Activated B cell treated with CpG ODN at 0.5 μM for 24 hours (primary cell): ENCODE measurements at regions of chr6 and their contacts with region 1.

Region 1: GRCh38 chr6:30541515-30542403 is 14.5 kb downstream of the GNL1 start:
- DNase-seq: peak; percentile 65
- ATAC-seq: peak; percentile 84
- H3K4me3 Mint-ChIP-seq: peak overlapping the region; percentile 81
- H3K27ac Mint-ChIP-seq: peak overlapping the region; percentile 81
- H3K4me1 Mint-ChIP-seq: peaks cover 30% of the 10 kb centered on the region
- H3K27me3 Mint-ChIP-seq: no peaks in the 10 kb centered on the region
- CTCF ChIP-seq: peak; percentile 98

Region 2: GRCh38 chr6:30500421-30501355 is 41.1 kb before region 1 on chr6:
- CTCF ChIA-PET with region 1: interaction called, 83 read pairs
- POLR2A ChIA-PET with region 1: interaction called, 147 read pairs
- intact Hi-C with region 1: no loop called
- DNase-seq: no peak
- ATAC-seq: peak; percentile 61
- H3K4me3 Mint-ChIP-seq: peak overlapping the region; percentile 74
- H3K27ac Mint-ChIP-seq: peak overlapping the region; percentile 79
- H3K4me1 Mint-ChIP-seq: peaks cover 49% of the 10 kb centered on the region
- H3K27me3 Mint-ChIP-seq: no peaks in the 10 kb centered on the region
- CTCF ChIP-seq: no peak

Region 3: GRCh38 chr6:30556066-30556905 is 14.5 kb after region 1 on chr6 and contains the start of gene GNL1:
- CTCF ChIA-PET with region 1: interaction called, 15 read pairs
- POLR2A ChIA-PET with region 1: interaction called, 55 read pairs
- intact Hi-C with region 1: loop called (anchors 1 kb)
- DNase-seq: peak; percentile 99
- ATAC-seq: peak; percentile 89
- H3K4me3 Mint-ChIP-seq: peak within 1 kb of the TSS; percentile 94
- H3K27ac Mint-ChIP-seq: peak within 1 kb of the TSS; percentile 97
- H3K4me1 Mint-ChIP-seq: peaks cover 40% of the 10 kb centered on the region
- H3K27me3 Mint-ChIP-seq: no peaks in the 10 kb centered on the region
- CTCF ChIP-seq: no peak
- total RNA-seq, gene GNL1: 67.2 and 67.4 TPM in 2 replicates

Region 4: GRCh38 chr6:30600451-30600961 is 58.7 kb after region 1 on chr6:
- CTCF ChIA-PET with region 1: interaction called, 16 read pairs
- POLR2A ChIA-PET with region 1: interaction called, 6 read pairs
- intact Hi-C with region 1: loop called (anchors 1 kb)
- DNase-seq: no peak
- ATAC-seq: no peak
- H3K4me3 Mint-ChIP-seq: no peak overlapping the region
- H3K27ac Mint-ChIP-seq: no peak overlapping the region
- H3K4me1 Mint-ChIP-seq: peaks cover 9% of the 10 kb centered on the region
- H3K27me3 Mint-ChIP-seq: no peaks in the 10 kb centered on the region
- CTCF ChIP-seq: no peak

Region 5: GRCh38 chr6:30730601-30731435 is 189.1 kb after region 1 on chr6:
- CTCF ChIA-PET with region 1: interaction called, 47 read pairs
- POLR2A ChIA-PET with region 1: interaction called, 4 read pairs
- intact Hi-C with region 1: loop called (anchors 1 kb)
- DNase-seq: peak; percentile 69
- ATAC-seq: peak; percentile 89
- H3K4me3 Mint-ChIP-seq: peak overlapping the region; percentile 41
- H3K27ac Mint-ChIP-seq: no peak overlapping the region
- H3K4me1 Mint-ChIP-seq: peaks cover 27% of the 10 kb centered on the region
- H3K27me3 Mint-ChIP-seq: no peaks in the 10 kb centered on the region
- CTCF ChIP-seq: peak; percentile 23